ENCODE measurements at regions of chr2 and their contacts with region 1.

Region 1: GRCh38 chr2:128027801-128028667 is at the start of gene SAP130:
- DNase-seq: peak; percentile 93 to 99 (median 98)
- ATAC-seq: peak; percentile 73 to 74
- H3K4me3 Mint-ChIP-seq: peak within 1 kb of the TSS; percentile 87 to 98 (median 96)
- H3K27ac Mint-ChIP-seq: peak within 1 kb of the TSS; percentile 72 to 97 (median 94)
- H3K4me1 Mint-ChIP-seq: peaks cover 10 to 35% (median 21%) of the 10 kb centered on the region in 4 donors
- H3K27me3 Mint-ChIP-seq: peaks cover 0 to 3% (median 0%) of the 10 kb centered on the region in 5 donors
- polyA plus RNA-seq, gene SAP130: 5.4 to 12.1 (median 5.9) TPM

Region 2: DNA sequence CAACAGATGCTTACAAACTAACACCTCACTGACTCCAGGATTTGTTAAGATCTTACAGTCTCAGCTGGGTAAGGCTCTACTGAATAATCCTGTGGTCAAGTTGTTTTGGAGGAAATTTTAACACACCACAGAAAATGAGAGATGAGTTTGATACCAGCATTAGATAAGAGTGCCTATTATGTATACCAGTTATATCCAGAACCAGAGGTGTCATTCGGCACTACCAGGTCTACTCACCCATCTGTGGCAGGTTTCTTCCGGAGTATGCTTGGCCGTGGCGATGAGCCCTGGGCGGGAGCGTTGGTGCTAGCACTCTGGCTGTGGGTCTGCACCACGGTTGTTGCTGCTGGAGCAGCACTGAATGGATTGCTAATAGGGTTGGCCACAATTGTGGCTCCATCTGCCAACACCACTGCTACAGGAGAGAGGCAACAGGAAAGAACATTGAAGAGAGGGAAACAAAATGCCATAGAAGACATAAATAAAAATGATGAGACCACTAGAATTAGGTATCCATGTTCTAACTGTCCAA is 41.4 kb before region 1 on chr2:
- POLR2A ChIA-PET with region 1: no interaction called
- DNase-seq: no peak
- ATAC-seq: no peak
- H3K4me3 Mint-ChIP-seq: no peak overlapping the region
- H3K27ac Mint-ChIP-seq: peak overlapping the region in 1 of 10 donors; percentile 72
- H3K4me1 Mint-ChIP-seq: peaks cover 0 to 6% (median 1%) of the 10 kb centered on the region in 4 donors
- H3K27me3 Mint-ChIP-seq: no peaks in the 10 kb centered on the region

Region 3: DNA sequence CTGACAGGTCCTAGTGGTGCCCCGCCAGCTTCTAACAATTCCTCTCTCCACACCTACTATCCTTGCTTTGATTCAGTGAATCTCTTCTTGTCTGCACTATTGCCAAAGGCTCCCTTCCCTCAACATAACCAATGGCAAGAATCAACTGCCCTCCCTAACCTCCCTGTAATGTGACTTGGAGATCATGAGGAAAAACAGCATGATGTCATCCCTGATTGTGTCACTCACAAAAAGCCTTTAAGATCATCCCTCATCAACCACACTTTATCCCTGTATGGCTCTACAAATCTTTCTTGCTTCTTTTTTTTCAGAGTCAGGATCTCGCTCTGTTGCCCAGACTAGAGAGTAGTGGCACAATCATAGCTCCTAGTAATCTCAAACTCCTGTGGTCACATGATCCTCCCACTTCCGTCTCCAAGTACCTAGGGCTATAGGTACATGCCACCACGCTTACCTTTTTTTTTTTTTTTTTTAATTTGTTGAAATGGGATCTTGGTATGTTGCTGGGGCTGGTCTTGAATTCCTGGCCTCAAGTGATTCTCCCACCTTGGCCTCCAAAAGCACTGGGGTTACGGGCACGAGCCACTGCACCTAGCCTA is 19.9 kb before region 1 on chr2:
- POLR2A ChIA-PET with region 1: no interaction called
- DNase-seq: no peak
- ATAC-seq: no peak
- H3K4me3 Mint-ChIP-seq: no peak overlapping the region
- H3K27ac Mint-ChIP-seq: no peak overlapping the region
- H3K4me1 Mint-ChIP-seq: peaks cover 0 to 4% (median 0%) of the 10 kb centered on the region in 4 donors
- H3K27me3 Mint-ChIP-seq: no peaks in the 10 kb centered on the region

Region 4: GRCh38 chr2:128054104-128054503 is 26.1 kb after region 1 on chr2:
- POLR2A ChIA-PET with region 1: no interaction called
- DNase-seq: no peak
- ATAC-seq: no peak
- H3K4me3 Mint-ChIP-seq: no peak overlapping the region
- H3K27ac Mint-ChIP-seq: no peak overlapping the region
- H3K4me1 Mint-ChIP-seq: no peaks in the 10 kb centered on the region
- H3K27me3 Mint-ChIP-seq: peaks cover 19 to 50% (median 33%) of the 10 kb centered on the region in 5 donors

Region 5: DNA sequence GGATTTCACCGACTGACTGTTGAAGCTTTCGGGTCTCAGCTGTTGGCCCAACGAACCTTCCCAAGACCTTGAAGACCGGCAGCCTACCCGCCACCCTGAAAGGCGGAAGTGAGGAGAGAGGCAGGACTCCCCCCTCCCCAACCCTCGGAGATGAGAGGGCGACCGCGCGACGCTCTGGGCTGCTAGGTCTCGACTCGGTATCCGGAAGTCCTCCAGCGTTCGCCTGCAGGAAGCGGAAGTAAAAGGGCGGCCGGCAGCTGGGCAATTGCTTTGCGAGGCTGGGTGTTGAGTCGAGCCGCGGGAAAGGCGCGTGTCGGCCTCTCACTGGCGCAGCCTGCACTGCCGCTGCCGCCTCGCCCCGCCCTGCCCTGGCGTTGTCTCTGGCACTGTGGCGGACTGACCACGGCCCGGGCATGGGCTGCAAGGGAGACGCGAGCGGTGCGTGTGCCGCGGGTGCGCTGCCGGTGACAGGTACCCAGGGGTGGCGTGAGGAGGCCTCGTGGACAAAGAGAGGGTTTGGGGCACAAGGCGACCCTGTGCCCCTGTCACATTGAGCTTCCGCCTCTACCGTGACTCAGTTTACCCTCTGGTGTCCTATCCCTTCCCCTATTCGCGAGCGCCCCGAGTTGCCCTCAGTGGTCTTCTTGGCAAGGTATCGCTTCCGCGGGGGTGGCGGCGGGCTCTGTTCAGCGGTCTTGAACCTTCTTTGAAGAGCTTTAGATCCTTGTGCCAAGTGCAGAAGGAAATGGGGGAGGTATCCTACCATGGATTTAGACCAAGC is 63.1 kb after region 1 on chr2 and contains the start of gene UGGT1:
- POLR2A ChIA-PET with region 1: interaction called, 27 read pairs
- DNase-seq: peak; percentile 81 to 96 (median 92)
- ATAC-seq: peak; percentile 94 to 96
- H3K4me3 Mint-ChIP-seq: peak within 1 kb of the TSS; percentile 88 to 98 (median 94)
- H3K27ac Mint-ChIP-seq: peak within 1 kb of the TSS; percentile 93 to 98 (median 97)
- H3K4me1 Mint-ChIP-seq: peaks cover 18 to 51% (median 47%) of the 10 kb centered on the region in 4 donors
- H3K27me3 Mint-ChIP-seq: no peaks in the 10 kb centered on the region
- polyA plus RNA-seq, gene UGGT1: 9.6 to 14.9 (median 10.0) TPM

Region 6: GRCh38 chr2:128217671-128218070 is 189.6 kb after region 1 on chr2:
- POLR2A ChIA-PET with region 1: no interaction called
- DNase-seq: no peak
- ATAC-seq: no peak
- H3K4me3 Mint-ChIP-seq: peak overlapping the region in 1 of 10 donors; percentile 33
- H3K27ac Mint-ChIP-seq: no peak overlapping the region
- H3K4me1 Mint-ChIP-seq: peaks cover 0 to 6% (median 4%) of the 10 kb centered on the region in 4 donors
- H3K27me3 Mint-ChIP-seq: peaks cover 0 to 2% (median 1%) of the 10 kb centered on the region in 5 donors